Transverse colon (tissue), 4 donors: ENCODE measurements at regions of chrX and their contacts with region 1.

Region 1: GRCh38 chrX:22748093-22748999 is 251.4 kb upstream of the DDX53 start:
- DNase-seq: peak; percentile 35
- H3K4me3 ChIP-seq: no peak overlapping the region
- H3K27ac ChIP-seq: no peak overlapping the region
- H3K4me1 ChIP-seq: no peaks in the 10 kb centered on the region
- H3K27me3 ChIP-seq: no peaks in the 10 kb centered on the region
- CTCF ChIP-seq: peak; percentile 39 to 73 (median 55)
- EP300 ChIP-seq: no peak
- POLR2A ChIP-seq: no peak

Region 2: GRCh38 chrX:22159071-22159799 is 589.1 kb before region 1 on chrX:
- in situ Hi-C with region 1: loop called in 1 of 4 experiments (anchors 25 kb)
- intact Hi-C with region 1: no loop called
- DNase-seq: no peak
- H3K4me3 ChIP-seq: no peak overlapping the region
- H3K27ac ChIP-seq: no peak overlapping the region
- H3K4me1 ChIP-seq: no peaks in the 10 kb centered on the region
- H3K27me3 ChIP-seq: no peaks in the 10 kb centered on the region
- CTCF ChIP-seq: no peak
- EP300 ChIP-seq: no peak
- POLR2A ChIP-seq: no peak

Region 3: GRCh38 chrX:22495761-22496160 is 252.6 kb before region 1 on chrX:
- in situ Hi-C with region 1: no loop called
- intact Hi-C with region 1: loop called (anchors 10 kb)
- DNase-seq: no peak
- H3K4me3 ChIP-seq: no peak overlapping the region
- H3K27ac ChIP-seq: no peak overlapping the region
- H3K4me1 ChIP-seq: no peaks in the 10 kb centered on the region
- H3K27me3 ChIP-seq: no peaks in the 10 kb centered on the region
- CTCF ChIP-seq: no peak
- EP300 ChIP-seq: no peak
- POLR2A ChIP-seq: no peak

Region 4: DNA sequence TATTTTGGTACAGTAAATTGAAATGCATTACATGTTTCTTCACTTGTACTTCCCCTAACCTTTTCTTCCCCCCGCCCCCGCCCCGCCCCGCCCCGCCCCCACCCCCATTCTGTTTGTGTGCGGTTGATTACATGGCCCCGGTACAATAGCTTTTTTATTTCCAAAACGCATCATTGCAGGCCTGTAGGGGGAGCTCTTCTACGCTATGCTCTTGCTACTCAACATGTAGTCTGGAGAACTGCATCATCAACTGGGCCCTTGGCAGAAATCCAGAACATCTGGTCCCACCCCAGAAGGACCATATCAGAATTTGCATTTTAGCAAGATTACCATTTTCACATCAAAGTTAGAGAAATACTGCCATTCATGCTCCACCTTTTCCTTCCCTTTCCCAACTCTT is 81.9 kb before region 1 on chrX:
- in situ Hi-C with region 1: no loop called
- intact Hi-C with region 1: no loop called
- DNase-seq: no peak
- H3K4me3 ChIP-seq: no peak overlapping the region
- H3K27ac ChIP-seq: no peak overlapping the region
- H3K4me1 ChIP-seq: no peaks in the 10 kb centered on the region
- H3K27me3 ChIP-seq: no peaks in the 10 kb centered on the region
- CTCF ChIP-seq: no peak
- EP300 ChIP-seq: no peak
- POLR2A ChIP-seq: no peak

Region 5: GRCh38 chrX:23907498-23908218 is 1159.3 kb after region 1 on chrX and contains the starts of genes APOO and CXorf58:
- in situ Hi-C with region 1: no loop called
- intact Hi-C with region 1: no loop called
- DNase-seq: peak; percentile 92
- H3K4me3 ChIP-seq: peak within 1 kb of the TSS; percentile 35 to 67 (median 53)
- H3K27ac ChIP-seq: peak within 1 kb of the TSS; percentile 82 to 96 (median 92)
- H3K4me1 ChIP-seq: peaks cover 0 to 10% (median 0%) of the 10 kb centered on the region in 4 donors
- H3K27me3 ChIP-seq: no peaks in the 10 kb centered on the region
- CTCF ChIP-seq: peak; percentile 68 to 95 (median 75)
- EP300 ChIP-seq: no peak
- POLR2A ChIP-seq: peak; percentile 65
- total RNA-seq, gene APOO: 10.0 to 24.5 (median 15.6) TPM in 3 of 4 donors, not detected in the other
- total RNA-seq, gene CXorf58: 0.27 TPM in 1 of 4 donors, not detected in the others